Psoas muscle (tissue), 8 donors: ENCODE measurements at regions of chr9 and their contacts with region 1.

Region 1: DNA sequence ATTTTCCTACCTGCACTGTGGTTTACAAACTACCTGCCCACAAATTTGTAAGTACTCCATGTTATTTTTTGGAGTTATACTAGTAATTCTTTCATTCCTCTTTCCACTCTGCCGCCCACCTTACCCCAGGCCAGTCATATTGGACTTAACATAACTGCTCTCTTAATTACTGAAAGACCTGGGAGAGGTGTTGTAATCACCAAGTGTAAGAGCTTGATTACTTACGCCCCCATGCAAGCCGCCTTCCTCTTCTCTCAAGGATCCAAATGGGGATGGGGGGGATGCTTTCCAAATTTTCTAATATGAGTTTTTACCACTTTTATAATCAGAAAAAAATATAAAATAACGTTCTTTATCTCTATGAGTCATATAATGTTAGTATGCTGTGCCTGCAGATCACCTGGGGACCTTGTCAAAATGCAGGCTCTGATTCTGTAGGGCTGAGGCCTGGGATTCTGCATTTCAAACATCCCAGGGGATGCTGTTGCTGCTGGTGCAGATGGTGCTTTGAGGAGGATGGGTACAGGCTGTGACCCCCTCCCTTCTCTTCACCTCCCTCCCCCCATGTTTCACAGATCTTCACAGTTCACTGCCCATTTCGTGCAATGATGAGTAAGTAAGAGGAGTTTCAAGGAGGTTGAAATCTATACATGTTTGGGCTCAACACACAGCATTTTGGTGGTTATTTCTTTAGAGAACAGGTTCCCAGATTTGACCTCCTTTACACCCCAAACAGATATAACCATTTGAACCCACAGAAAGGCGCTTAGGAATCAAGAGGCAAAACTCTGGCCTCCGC is 87.3 kb downstream of the SEC61B start:
- DNase-seq: no peak
- ATAC-seq: no peak
- H3K4me3 ChIP-seq: no peak overlapping the region
- H3K27ac ChIP-seq: no peak overlapping the region
- H3K4me1 ChIP-seq: no peaks in the 10 kb centered on the region
- H3K27me3 ChIP-seq: no peaks in the 10 kb centered on the region
- CTCF ChIP-seq: no peak

Region 2: GRCh38 chr9:99322294-99322693 is 13.0 kb after region 1 on chr9:
- intact Hi-C with region 1: loop called in 1 of 2 experiments (anchors 1 kb)
- DNase-seq: no peak
- ATAC-seq: no peak
- H3K4me3 ChIP-seq: no peak overlapping the region
- H3K27ac ChIP-seq: no peak overlapping the region
- H3K4me1 ChIP-seq: no peaks in the 10 kb centered on the region
- H3K27me3 ChIP-seq: peaks cover 0 to 5% (median 0%) of the 10 kb centered on the region in 3 donors
- CTCF ChIP-seq: no peak

Region 3: GRCh38 chr9:99356512-99356971 is 47.2 kb after region 1 on chr9:
- intact Hi-C with region 1: no loop called
- DNase-seq: peak; percentile 79 to 93
- ATAC-seq: peak; percentile 76 to 83 (median 78)
- H3K4me3 ChIP-seq: no peak overlapping the region
- H3K27ac ChIP-seq: peak overlapping the region; percentile 85
- H3K4me1 ChIP-seq: peaks cover 34% of the 10 kb centered on the region
- H3K27me3 ChIP-seq: no peaks in the 10 kb centered on the region
- CTCF ChIP-seq: no peak